ENCODE measurements at regions of chr2 and their contacts with region 1.

Region 1: DNA sequence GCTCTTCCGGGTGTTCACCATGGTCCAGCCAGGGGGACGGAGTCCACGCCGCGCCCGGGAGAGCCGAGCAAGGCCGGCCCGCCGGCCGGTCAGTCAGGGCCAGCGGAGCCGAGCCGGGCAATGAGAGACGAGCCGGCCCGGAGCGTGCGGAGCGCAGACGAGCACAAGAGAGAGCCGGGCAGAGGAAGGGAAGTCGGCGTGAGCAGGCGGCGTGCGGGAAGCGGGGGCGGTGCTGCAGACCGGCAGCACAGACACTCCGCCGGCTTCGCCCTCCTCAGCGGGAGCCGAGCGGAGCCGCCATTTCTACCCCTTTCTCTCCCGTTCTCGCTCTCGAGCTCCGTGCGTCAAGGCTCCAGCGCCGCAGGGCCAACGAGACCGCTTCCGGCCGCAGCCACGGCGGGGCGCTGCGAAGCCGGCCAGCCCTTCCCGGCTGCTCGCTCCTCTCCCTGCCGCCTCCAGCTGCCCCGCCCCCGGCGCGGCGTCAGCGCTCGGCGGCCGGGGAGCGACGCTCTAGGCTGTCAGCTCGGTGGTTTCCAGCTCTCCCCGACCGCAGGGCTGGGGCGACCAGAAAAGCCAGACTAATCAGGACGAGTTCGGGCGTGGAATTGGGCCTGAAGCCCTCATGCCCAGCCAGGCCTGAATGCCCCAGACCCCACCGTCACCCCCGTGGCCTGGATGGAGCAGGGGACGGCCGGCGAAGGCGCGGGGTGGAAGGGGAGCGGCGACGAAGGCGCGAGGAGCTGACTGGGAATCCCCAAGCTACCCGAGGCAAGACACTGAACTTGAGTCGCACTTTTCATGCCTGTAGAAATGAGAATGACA is at the start of gene ATAD2B:
- DNase-seq: peak; percentile 91 to 99
- H3K4me3 ChIP-seq: peak within 1 kb of the TSS; percentile 99
- H3K4me3 Mint-ChIP-seq: peak within 1 kb of the TSS; percentile 91
- H3K27ac Mint-ChIP-seq: peak within 1 kb of the TSS; percentile 94
- H3K4me1 ChIP-seq: 0 out of 2 replicates have a peak, but pooled peaks cover 3% of the 10 kb centered on the region
- H3K4me1 Mint-ChIP-seq: peaks cover 25% of the 10 kb centered on the region
- H3K27me3 ChIP-seq: no peaks in the 10 kb centered on the region
- H3K27me3 Mint-ChIP-seq: no peaks in the 10 kb centered on the region
- CTCF ChIP-seq: peak; percentile 74 to 92
- total RNA-seq, gene ATAD2B: 28.9 and 32.1 TPM in 2 replicates

Region 2: DNA sequence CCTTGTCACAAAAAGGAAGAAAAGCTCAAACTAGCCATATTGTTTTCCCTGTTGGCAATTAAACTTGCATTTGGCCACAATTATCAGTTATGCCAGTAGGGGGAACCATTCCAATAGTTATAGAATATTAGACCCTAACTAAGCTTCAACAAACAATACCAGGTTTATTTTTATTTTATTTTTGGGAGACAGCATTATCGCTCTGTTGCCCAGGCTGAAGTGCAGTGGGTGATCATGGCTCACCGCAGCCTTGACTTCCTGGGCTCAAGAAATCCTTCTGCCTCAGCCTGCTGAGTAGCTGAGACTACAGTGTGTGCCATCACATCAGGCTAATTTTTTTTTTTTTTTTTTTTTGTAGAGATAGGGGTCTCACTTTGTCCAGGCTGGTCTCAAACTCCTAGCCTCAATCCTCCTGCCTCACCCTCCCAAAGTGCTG is 102.2 kb before region 1 on chr2:
- CTCF ChIA-PET with region 1: interaction called, 35 read pairs
- POLR2A ChIA-PET with region 1: interaction called, 5 read pairs
- intact Hi-C with region 1: loop called (anchors 5 kb)
- DNase-seq: peak in 1 of 2 experiments; percentile 66
- H3K4me3 ChIP-seq: no peak overlapping the region
- H3K4me3 Mint-ChIP-seq: no peak overlapping the region
- H3K27ac Mint-ChIP-seq: no peak overlapping the region
- H3K4me1 ChIP-seq: no peaks in the 10 kb centered on the region
- H3K4me1 Mint-ChIP-seq: no peaks in the 10 kb centered on the region
- H3K27me3 ChIP-seq: no peaks in the 10 kb centered on the region
- H3K27me3 Mint-ChIP-seq: no peaks in the 10 kb centered on the region
- CTCF ChIP-seq: peak; percentile 72 to 74

Region 3: DNA sequence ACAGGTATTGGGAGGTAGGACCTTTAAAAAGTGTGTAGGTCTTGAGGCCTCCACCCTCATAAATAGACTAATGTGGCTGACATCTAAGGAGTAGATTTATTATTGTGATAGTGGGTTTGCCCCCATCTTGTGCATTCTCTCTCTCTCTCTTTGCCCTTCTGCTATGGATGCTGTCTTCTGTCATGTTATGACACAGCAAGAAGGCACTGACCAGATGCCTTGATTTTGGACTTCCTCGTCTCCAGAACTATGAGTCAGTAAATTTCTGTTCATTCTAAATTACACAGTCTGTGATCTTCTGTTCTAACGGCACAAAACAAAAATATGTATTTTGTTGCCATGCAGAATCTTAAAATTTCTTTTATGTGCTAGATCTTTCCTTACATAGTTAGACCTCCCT is 67.0 kb before region 1 on chr2:
- CTCF ChIA-PET with region 1: no interaction called
- POLR2A ChIA-PET with region 1: no interaction called
- intact Hi-C with region 1: no loop called
- DNase-seq: no peak
- H3K4me3 ChIP-seq: no peak overlapping the region
- H3K4me3 Mint-ChIP-seq: no peak overlapping the region
- H3K27ac Mint-ChIP-seq: no peak overlapping the region
- H3K4me1 ChIP-seq: no peaks in the 10 kb centered on the region
- H3K4me1 Mint-ChIP-seq: no peaks in the 10 kb centered on the region
- H3K27me3 ChIP-seq: no peaks in the 10 kb centered on the region
- H3K27me3 Mint-ChIP-seq: no peaks in the 10 kb centered on the region
- CTCF ChIP-seq: no peak

Region 4: DNA sequence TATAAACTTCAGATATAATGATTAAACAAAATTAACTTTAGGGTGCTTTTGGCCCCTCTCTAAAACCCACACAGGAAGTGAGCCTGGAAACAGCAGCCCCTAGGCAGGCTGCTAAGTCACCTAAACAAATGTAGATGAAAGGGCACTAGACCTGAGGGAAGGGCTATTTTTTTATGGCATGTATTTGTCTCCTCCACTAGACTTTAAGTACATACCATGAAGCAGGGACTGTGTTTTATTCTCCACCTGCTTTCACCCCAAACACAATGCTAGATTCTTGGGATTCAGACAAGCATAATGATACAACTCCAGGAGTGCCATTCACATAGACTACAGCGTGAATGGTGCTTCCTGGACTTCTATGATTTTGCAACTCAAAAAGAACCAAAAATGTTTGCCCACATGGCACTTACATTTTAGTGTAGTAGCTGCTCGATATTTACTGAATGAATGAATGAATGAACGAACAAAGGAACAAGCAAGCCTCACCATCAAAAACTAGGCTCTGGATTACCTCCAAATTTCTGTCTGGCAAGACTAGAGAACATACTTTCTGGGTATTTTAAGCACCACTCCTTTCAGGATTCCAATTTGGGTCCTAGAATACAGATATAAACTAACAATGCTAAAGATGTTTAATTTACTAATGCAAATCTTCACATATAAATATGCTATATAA is 10.1 kb before region 1 on chr2:
- CTCF ChIA-PET with region 1: no interaction called
- POLR2A ChIA-PET with region 1: interaction called, 5 read pairs
- intact Hi-C with region 1: loop called (anchors 1 kb)
- DNase-seq: no peak
- H3K4me3 ChIP-seq: no peak overlapping the region
- H3K4me3 Mint-ChIP-seq: no peak overlapping the region
- H3K27ac Mint-ChIP-seq: peak overlapping the region; percentile 60
- H3K4me1 ChIP-seq: peaks cover 16% of the 10 kb centered on the region
- H3K4me1 Mint-ChIP-seq: peaks cover 11% of the 10 kb centered on the region
- H3K27me3 ChIP-seq: no peaks in the 10 kb centered on the region
- H3K27me3 Mint-ChIP-seq: no peaks in the 10 kb centered on the region
- CTCF ChIP-seq: no peak

Region 5: DNA sequence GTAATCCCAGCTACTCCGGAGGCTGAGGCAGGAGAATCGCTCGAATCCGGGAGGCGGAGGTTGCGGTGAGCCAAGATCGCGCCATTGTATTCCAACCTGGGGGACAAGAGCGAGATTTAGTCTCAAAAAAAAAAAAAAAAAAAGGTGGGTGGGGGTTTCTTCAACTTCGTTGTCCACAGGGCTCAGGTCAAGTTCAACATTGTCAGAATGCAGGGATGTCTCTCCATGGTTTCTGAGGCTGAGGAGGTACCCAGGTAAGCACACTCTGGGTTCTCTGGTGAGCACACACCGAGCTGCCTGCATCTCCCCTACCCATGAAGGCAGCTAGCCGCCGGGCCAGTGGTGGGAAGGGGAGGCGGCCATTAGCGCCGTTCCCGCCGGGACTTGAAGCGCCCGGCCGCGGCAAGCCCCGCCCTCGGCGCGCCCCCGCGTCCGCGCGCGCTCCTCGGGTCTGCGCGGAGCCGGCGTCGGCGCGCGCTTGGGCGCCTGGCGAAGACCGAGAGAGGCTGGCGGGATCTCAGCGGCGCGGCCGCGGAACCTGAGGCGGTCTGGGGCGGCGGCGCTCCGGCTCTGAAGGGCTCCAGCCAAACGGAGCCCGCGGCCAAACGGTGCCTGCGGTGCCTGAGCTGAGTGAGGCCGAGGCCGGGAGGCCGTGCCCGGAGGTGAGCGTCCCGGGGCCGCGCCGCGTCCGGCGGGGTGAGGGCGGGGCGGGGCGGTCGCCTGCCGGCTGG is 13.2 kb after region 1 on chr2 and contains the start of gene UBXN2A:
- CTCF ChIA-PET with region 1: interaction called, 7 read pairs
- POLR2A ChIA-PET with region 1: interaction called, 40 read pairs
- intact Hi-C with region 1: loop called (anchors 1 kb)
- DNase-seq: peak; percentile 75 to 90
- H3K4me3 ChIP-seq: peak within 1 kb of the TSS; percentile 56
- H3K4me3 Mint-ChIP-seq: peak within 1 kb of the TSS; percentile 76
- H3K27ac Mint-ChIP-seq: peak within 1 kb of the TSS; percentile 51
- H3K4me1 ChIP-seq: peaks cover 5% of the 10 kb centered on the region
- H3K4me1 Mint-ChIP-seq: peaks cover 18% of the 10 kb centered on the region
- H3K27me3 ChIP-seq: no peaks in the 10 kb centered on the region
- H3K27me3 Mint-ChIP-seq: no peaks in the 10 kb centered on the region
- CTCF ChIP-seq: no peak
- total RNA-seq, gene UBXN2A: 21.6 and 22.0 TPM in 2 replicates

Region 6: GRCh38 chr2:24046930-24047702 is 120.2 kb after region 1 on chr2 and contains the start of gene WDCP:
- CTCF ChIA-PET with region 1: interaction called, 13 read pairs
- POLR2A ChIA-PET with region 1: interaction called, 12 read pairs
- intact Hi-C with region 1: no loop called
- DNase-seq: peak; percentile 96 to 98
- H3K4me3 ChIP-seq: peak within 1 kb of the TSS; percentile 65
- H3K4me3 Mint-ChIP-seq: peak within 1 kb of the TSS; percentile 86
- H3K27ac Mint-ChIP-seq: peak within 1 kb of the TSS; percentile 30
- H3K4me1 ChIP-seq: peaks cover 4% of the 10 kb centered on the region; the same call in 1 of the 2 replicates
- H3K4me1 Mint-ChIP-seq: peaks cover 7% of the 10 kb centered on the region
- H3K27me3 ChIP-seq: no peaks in the 10 kb centered on the region
- H3K27me3 Mint-ChIP-seq: no peaks in the 10 kb centered on the region
- CTCF ChIP-seq: no peak
- total RNA-seq, gene WDCP: 10.4 and 13.0 TPM in 2 replicates

Region 7: DNA sequence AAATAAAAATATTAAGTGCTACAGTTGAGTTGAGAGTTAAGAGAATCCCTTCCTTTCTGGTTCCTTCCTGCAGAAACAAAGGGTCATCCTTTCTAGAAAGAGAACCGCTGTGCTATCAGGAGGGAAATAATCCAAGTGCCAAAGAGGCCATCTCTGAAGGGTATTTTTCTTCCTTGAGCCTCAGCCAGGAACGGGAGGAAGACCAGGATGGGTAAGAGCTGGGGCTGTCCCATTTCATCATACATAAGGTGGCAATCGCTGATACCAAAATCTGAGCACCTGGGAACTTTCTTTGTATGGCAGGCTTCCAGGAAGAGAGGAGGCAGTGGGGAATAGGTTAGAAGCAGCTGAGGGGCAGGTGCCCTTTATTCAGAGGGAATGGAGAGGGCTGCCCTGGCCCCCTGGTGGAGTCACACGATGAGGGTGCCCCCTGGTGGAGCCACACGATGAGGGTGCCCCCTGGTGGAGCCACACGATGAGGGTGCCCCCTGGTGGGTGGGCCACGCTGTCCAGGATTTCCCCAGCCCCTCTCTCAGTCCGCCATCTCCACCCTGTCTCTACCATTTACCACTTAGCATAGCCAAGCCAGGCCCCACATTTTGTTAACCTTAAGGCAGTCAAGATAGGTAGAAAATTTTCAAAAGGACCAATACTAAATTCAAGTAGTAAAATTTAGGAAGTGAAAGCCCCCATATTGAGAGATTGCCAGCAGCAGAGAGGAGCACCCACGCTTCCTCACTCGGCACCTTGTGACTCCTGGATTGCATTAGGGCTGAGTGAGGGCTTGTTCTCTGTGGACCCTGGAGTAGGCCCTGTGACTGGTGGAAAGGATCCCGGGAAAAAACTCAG is 237.4 kb after region 1 on chr2:
- CTCF ChIA-PET with region 1: interaction called, 5 read pairs
- POLR2A ChIA-PET with region 1: no interaction called
- intact Hi-C with region 1: loop called (anchors 10 kb)
- DNase-seq: peak; percentile 66 to 84
- H3K4me3 ChIP-seq: no peak overlapping the region
- H3K4me3 Mint-ChIP-seq: no peak overlapping the region
- H3K27ac Mint-ChIP-seq: no peak overlapping the region
- H3K4me1 ChIP-seq: no peaks in the 10 kb centered on the region
- H3K4me1 Mint-ChIP-seq: no peaks in the 10 kb centered on the region
- H3K27me3 ChIP-seq: no peaks in the 10 kb centered on the region; the same call in 1 of the 2 replicates
- H3K27me3 Mint-ChIP-seq: peaks cover 2% of the 10 kb centered on the region
- CTCF ChIP-seq: peak; percentile 93 to 99

Region 8: GRCh38 chr2:24360050-24360962 is 433.3 kb after region 1 on chr2 and contains the start of gene ITSN2:
- CTCF ChIA-PET with region 1: no interaction called
- POLR2A ChIA-PET with region 1: no interaction called
- intact Hi-C with region 1: loop called (anchors 10 kb)
- DNase-seq: peak; percentile 81 to 88
- H3K4me3 ChIP-seq: peak within 1 kb of the TSS; percentile 90
- H3K4me3 Mint-ChIP-seq: peak within 1 kb of the TSS; percentile 78
- H3K27ac Mint-ChIP-seq: peak within 1 kb of the TSS; percentile 68
- H3K4me1 ChIP-seq: peaks cover 41% of the 10 kb centered on the region
- H3K4me1 Mint-ChIP-seq: peaks cover 33% of the 10 kb centered on the region
- H3K27me3 ChIP-seq: no peaks in the 10 kb centered on the region
- H3K27me3 Mint-ChIP-seq: no peaks in the 10 kb centered on the region
- CTCF ChIP-seq: no peak
- total RNA-seq, gene ITSN2: 42.8 and 49.4 TPM in 2 replicates